ENCODE measurements at regions of chr1 and their contacts with region 1.

Region 1: GRCh38 chr1:150674881-150675280 is 22.1 kb downstream of the GOLPH3L start:
- DNase-seq: no peak
- ATAC-seq: no peak
- H3K4me3 ChIP-seq: no peak overlapping the region
- H3K27ac ChIP-seq: no peak overlapping the region
- H3K4me1 ChIP-seq: no peaks in the 10 kb centered on the region
- H3K27me3 ChIP-seq: no peaks in the 10 kb centered on the region
- CTCF ChIP-seq: no peak
- POLR2A ChIP-seq: no peak
- RAD21 ChIP-seq: no peak

Region 2: DNA sequence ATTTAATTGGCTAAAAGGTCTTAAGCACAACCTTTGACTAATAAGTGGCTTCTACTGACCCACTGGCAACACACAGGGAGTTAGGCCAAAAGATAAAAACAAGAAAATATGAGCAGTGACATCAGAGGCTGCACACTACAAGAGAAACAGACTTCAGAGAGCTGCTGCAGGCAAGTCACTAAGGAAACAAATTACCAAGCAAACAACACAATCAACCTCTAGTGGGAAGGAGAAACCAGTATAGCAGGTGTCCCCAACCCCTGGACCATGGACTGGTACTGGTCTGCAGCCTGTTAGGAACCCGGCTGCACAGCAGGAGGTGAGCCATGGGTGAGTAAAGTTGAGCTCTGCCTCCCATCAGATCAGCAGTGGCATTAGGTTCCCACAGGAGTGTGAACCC is 24.7 kb before region 1 on chr1:
- CTCF ChIA-PET with region 1: interaction called, 3 read pairs
- POLR2A ChIA-PET with region 1: no interaction called
- dilution Hi-C with region 1: no loop called
- in situ Hi-C with region 1: no loop called
- intact Hi-C with region 1: loop called (anchors 1 kb)
- DNase-seq: peak; percentile 7
- ATAC-seq: peak; percentile 32; the same call in 1 of the 2 replicates
- H3K4me3 ChIP-seq: no peak overlapping the region
- H3K27ac ChIP-seq: no peak overlapping the region
- H3K4me1 ChIP-seq: no peaks in the 10 kb centered on the region
- H3K27me3 ChIP-seq: no peaks in the 10 kb centered on the region
- CTCF ChIP-seq: no peak
- POLR2A ChIP-seq: no peak
- RAD21 ChIP-seq: no peak

Region 3: DNA sequence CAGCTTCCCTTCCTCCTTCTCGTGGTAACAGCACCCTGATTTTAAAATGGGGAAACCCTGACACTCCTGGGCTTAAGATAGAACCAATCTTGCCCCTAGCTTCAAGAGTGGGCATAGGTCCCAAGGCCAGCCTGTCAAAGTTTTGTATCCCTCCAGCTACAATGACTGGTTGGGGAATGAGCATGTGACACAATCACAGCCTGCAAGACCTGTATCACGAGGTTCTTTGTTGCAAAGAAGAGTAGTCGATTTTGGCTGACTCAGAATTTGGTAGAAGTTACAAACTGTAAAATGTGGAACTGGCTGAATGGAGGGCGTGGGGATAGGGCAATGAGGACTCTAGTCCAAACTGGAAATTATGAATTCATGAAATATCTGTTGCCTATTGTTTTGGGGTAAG is 114.5 kb after region 1 on chr1:
- CTCF ChIA-PET with region 1: no interaction called
- POLR2A ChIA-PET with region 1: no interaction called
- dilution Hi-C with region 1: no loop called
- in situ Hi-C with region 1: no loop called
- intact Hi-C with region 1: no loop called
- DNase-seq: no peak
- ATAC-seq: no peak
- H3K4me3 ChIP-seq: no peak overlapping the region
- H3K27ac ChIP-seq: no peak overlapping the region
- H3K4me1 ChIP-seq: peaks cover 3% of the 10 kb centered on the region
- H3K27me3 ChIP-seq: no peaks in the 10 kb centered on the region
- CTCF ChIP-seq: no peak
- POLR2A ChIP-seq: no peak
- RAD21 ChIP-seq: no peak